CD4-positive, alpha-beta memory T cell (primary cell): ENCODE measurements at regions of chr17 and their contacts with region 1.

Region 1: GRCh38 chr17:34542700-34543336 is 36.6 kb upstream of the TMEM132E start:
- DNase-seq: peak in 4 of 5 donors; percentile 41 to 52 (median 48)
- H3K4me3 ChIP-seq: no peak overlapping the region
- H3K4me3 Mint-ChIP-seq: no peak overlapping the region
- H3K27ac ChIP-seq: no peak overlapping the region
- H3K27ac Mint-ChIP-seq: no peak overlapping the region
- H3K4me1 ChIP-seq: no peaks in the 10 kb centered on the region
- H3K4me1 Mint-ChIP-seq: no peaks in the 10 kb centered on the region
- H3K27me3 ChIP-seq: no peaks in the 10 kb centered on the region
- H3K27me3 Mint-ChIP-seq: peaks cover 17 to 26% of the 10 kb centered on the region in 2 donors

Region 2: GRCh38 chr17:34182036-34182803 is 360.6 kb before region 1 on chr17:
- CTCF ChIA-PET with region 1: no interaction called
- POLR2A ChIA-PET with region 1: no interaction called
- intact Hi-C with region 1: no loop called
- DNase-seq: no peak
- H3K4me3 ChIP-seq: no peak overlapping the region
- H3K4me3 Mint-ChIP-seq: no peak overlapping the region
- H3K27ac ChIP-seq: no peak overlapping the region
- H3K27ac Mint-ChIP-seq: no peak overlapping the region
- H3K4me1 ChIP-seq: no peaks in the 10 kb centered on the region
- H3K4me1 Mint-ChIP-seq: peaks cover 0 to 3% (median 0%) of the 10 kb centered on the region in 4 donors
- H3K27me3 ChIP-seq: no peaks in the 10 kb centered on the region
- H3K27me3 Mint-ChIP-seq: peaks cover 17 to 21% of the 10 kb centered on the region in 2 donors

Region 3: DNA sequence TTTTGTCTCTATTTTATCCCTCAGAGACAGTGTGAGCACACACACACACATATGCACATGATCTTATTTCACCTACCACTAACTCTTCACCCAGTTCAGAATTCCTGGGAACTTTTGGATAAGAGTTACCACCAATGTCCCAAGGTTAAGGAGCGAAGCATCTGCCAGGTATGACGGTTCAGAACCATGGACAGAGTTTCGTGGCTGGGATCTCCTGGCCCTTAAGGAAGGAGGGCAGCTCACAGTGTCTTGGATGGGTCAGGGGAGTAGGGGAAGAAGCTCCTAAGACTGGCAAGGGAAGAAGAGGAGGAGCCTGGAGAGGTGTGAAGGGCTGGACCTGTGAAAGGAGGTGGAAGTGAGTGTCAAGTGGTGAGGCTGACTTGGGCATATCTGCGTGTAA is 13.6 kb after region 1 on chr17:
- CTCF ChIA-PET with region 1: interaction called, 10 read pairs
- POLR2A ChIA-PET with region 1: no interaction called
- intact Hi-C with region 1: no loop called
- DNase-seq: no peak
- H3K4me3 ChIP-seq: no peak overlapping the region
- H3K4me3 Mint-ChIP-seq: no peak overlapping the region
- H3K27ac ChIP-seq: no peak overlapping the region
- H3K27ac Mint-ChIP-seq: no peak overlapping the region
- H3K4me1 ChIP-seq: no peaks in the 10 kb centered on the region
- H3K4me1 Mint-ChIP-seq: no peaks in the 10 kb centered on the region
- H3K27me3 ChIP-seq: no peaks in the 10 kb centered on the region
- H3K27me3 Mint-ChIP-seq: peaks cover 14 to 22% of the 10 kb centered on the region in 2 donors